ENCODE measurements at regions of chr12 and their contacts with region 1.

Region 1: DNA sequence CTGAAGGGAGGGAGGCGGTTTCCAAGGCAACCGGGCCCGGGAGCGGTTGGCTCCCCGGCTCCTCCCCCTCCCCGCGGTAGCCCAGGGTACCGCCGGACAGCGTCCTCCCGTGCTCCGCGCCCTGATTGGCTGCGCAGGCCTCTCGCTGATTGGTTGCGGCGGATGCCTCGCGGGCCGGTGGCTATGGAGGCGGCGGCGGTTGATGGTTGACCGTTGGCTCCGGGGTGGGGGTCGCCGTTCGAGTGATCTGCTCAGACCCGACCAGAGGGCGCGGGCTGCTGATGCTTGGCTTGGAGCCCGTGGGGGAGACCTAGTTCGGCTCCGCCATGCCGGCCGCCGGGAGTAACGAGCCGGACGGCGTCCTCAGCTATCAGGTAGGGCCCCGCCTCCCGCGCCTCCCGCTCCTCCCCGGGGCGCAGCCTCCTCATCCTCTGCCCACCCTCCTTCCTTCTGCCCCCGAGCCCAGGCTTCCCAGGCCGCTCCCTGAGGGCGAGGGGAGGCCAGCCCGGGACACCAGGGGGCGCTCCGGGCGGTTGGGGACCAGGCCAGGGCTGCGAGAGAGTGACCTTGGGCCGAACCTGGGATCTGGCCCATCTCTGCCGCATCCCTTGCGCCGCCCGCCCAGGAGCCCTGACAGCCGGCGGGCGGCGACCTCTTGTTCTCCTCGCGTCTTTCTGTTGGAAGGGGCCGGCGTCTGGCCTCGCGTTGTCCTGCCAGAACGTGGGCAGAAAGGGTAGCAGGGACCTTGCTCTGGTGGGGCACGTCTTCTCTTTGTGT is at the start of gene SLC4A8:
- DNase-seq: peak; percentile 84 to 85
- ATAC-seq: peak; percentile 93 to 96 (median 94)
- H3K4me3 ChIP-seq: peak within 1 kb of the TSS; percentile 34 to 66 (median 57)
- H3K27ac ChIP-seq: peak within 1 kb of the TSS in 2 of 10 donors; percentile 2 to 27
- H3K4me1 ChIP-seq: peaks cover 0 to 13% (median 10%) of the 10 kb centered on the region in 9 donors
- H3K27me3 ChIP-seq: peaks cover 0 to 36% (median 5%) of the 10 kb centered on the region in 7 donors
- CTCF ChIP-seq: peak; percentile 31 to 83 (median 79)
- total RNA-seq, gene SLC4A8: 0.28 to 1.8 (median 0.63) TPM

Region 2: GRCh38 chr12:51460519-51460918 is 35.7 kb after region 1 on chr12:
- intact Hi-C with region 1: no loop called
- DNase-seq: no peak
- ATAC-seq: no peak
- H3K4me3 ChIP-seq: no peak overlapping the region
- H3K27ac ChIP-seq: no peak overlapping the region
- H3K4me1 ChIP-seq: no peaks in the 10 kb centered on the region
- H3K27me3 ChIP-seq: no peaks in the 10 kb centered on the region
- CTCF ChIP-seq: no peak

Region 3: GRCh38 chr12:51531978-51532497 is 107.2 kb after region 1 on chr12:
- intact Hi-C with region 1: loop called (anchors 1 to 5 kb)
- DNase-seq: peak; percentile 53 to 69
- ATAC-seq: peak; percentile 63 to 88 (median 84)
- H3K4me3 ChIP-seq: no peak overlapping the region
- H3K27ac ChIP-seq: no peak overlapping the region
- H3K4me1 ChIP-seq: no peaks in the 10 kb centered on the region
- H3K27me3 ChIP-seq: peaks cover 0 to 60% (median 44%) of the 10 kb centered on the region in 7 donors
- CTCF ChIP-seq: peak; percentile 75 to 92 (median 85)

Region 4: GRCh38 chr12:51579321-51579850 is 154.5 kb after region 1 on chr12:
- intact Hi-C with region 1: no loop called
- DNase-seq: no peak
- ATAC-seq: no peak
- H3K4me3 ChIP-seq: no peak overlapping the region
- H3K27ac ChIP-seq: no peak overlapping the region
- H3K4me1 ChIP-seq: no peaks in the 10 kb centered on the region
- H3K27me3 ChIP-seq: peaks cover 0 to 41% (median 12%) of the 10 kb centered on the region in 7 donors
- CTCF ChIP-seq: no peak

Region 5: GRCh38 chr12:51823875-51824565 is 399.2 kb after region 1 on chr12:
- intact Hi-C with region 1: loop called in 6 of 10 experiments (anchors 2 to 10 kb)
- DNase-seq: peak in 1 of 2 donors; percentile 28
- ATAC-seq: peak in 6 of 8 donors; percentile 23 to 59 (median 39)
- H3K4me3 ChIP-seq: no peak overlapping the region
- H3K27ac ChIP-seq: no peak overlapping the region
- H3K4me1 ChIP-seq: peaks cover 0 to 36% (median 0%) of the 10 kb centered on the region in 9 donors
- H3K27me3 ChIP-seq: peaks cover 0 to 25% (median 13%) of the 10 kb centered on the region in 7 donors
- CTCF ChIP-seq: peak; percentile 13 to 64 (median 55)

Region 6: GRCh38 chr12:51871126-51871525 is 446.3 kb after region 1 on chr12:
- intact Hi-C with region 1: loop called in 7 of 10 experiments (anchors 2 to 5 kb)
- DNase-seq: no peak
- ATAC-seq: peak in 2 of 8 donors; percentile 30 to 36
- H3K4me3 ChIP-seq: no peak overlapping the region
- H3K27ac ChIP-seq: no peak overlapping the region
- H3K4me1 ChIP-seq: peaks cover 6 to 36% (median 20%) of the 10 kb centered on the region in 9 donors
- H3K27me3 ChIP-seq: peaks cover 0 to 41% (median 20%) of the 10 kb centered on the region in 7 donors
- CTCF ChIP-seq: no peak

Region 7: GRCh38 chr12:51980051-51980808 is 555.4 kb after region 1 on chr12:
- intact Hi-C with region 1: loop called in 1 of 10 experiments (anchors 10 kb)
- DNase-seq: peak; percentile 40 to 60
- ATAC-seq: peak; percentile 86 to 95 (median 92)
- H3K4me3 ChIP-seq: no peak overlapping the region
- H3K27ac ChIP-seq: no peak overlapping the region
- H3K4me1 ChIP-seq: peaks cover 0 to 40% (median 0%) of the 10 kb centered on the region in 9 donors
- H3K27me3 ChIP-seq: no peaks in the 10 kb centered on the region
- CTCF ChIP-seq: peak; percentile 95 to 99 (median 97)